MCF 10A (cell line): ENCODE measurements at regions of chr12 and their contacts with region 1.

Region 1: DNA sequence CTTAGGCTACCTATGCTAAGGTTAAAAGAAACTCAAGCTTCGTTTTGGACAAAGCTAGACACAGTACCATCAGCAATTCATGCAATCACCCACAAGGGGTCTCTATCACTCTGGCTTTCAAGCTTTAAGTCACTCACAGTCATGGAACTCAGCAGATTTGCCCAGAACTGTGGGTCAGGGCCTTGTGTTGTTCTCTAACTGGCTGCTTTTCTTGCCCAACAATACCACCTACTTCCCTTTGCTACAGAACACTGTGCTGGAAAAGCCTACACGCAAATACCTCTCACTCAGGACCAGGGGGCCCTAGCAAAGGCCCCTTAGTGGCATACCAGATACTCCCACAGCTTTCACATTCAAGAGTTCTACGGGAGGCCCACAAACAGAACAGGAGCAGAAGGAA is 9.1 kb downstream of the NEMP1 start:
- DNase-seq: peak; percentile 86
- H3K4me3 Mint-ChIP-seq: no peak overlapping the region
- H3K27ac Mint-ChIP-seq: peak overlapping the region; percentile 83
- H3K4me1 Mint-ChIP-seq: peaks cover 12% of the 10 kb centered on the region
- H3K27me3 Mint-ChIP-seq: no peaks in the 10 kb centered on the region
- CTCF ChIP-seq: peak; percentile 78

Region 2: GRCh38 chr12:57031138-57031725 is 38.3 kb before region 1 on chr12:
- CTCF ChIA-PET with region 1: interaction called, 13 read pairs
- POLR2A ChIA-PET with region 1: interaction called, 3 read pairs
- intact Hi-C with region 1: no loop called
- DNase-seq: peak; percentile 81
- H3K4me3 Mint-ChIP-seq: peak overlapping the region; percentile 41
- H3K27ac Mint-ChIP-seq: peak overlapping the region; percentile 76
- H3K4me1 Mint-ChIP-seq: peaks cover 30% of the 10 kb centered on the region
- H3K27me3 Mint-ChIP-seq: peaks cover 21% of the 10 kb centered on the region
- CTCF ChIP-seq: no peak

Region 3: GRCh38 chr12:57088459-57089248 is 19.1 kb after region 1 on chr12 and contains the start of gene NAB2:
- CTCF ChIA-PET with region 1: interaction called, 20 read pairs
- POLR2A ChIA-PET with region 1: interaction called, 19 read pairs
- intact Hi-C with region 1: loop called (anchors 1 kb)
- DNase-seq: peak; percentile 96
- H3K4me3 Mint-ChIP-seq: peak within 1 kb of the TSS; percentile 90
- H3K27ac Mint-ChIP-seq: peak within 1 kb of the TSS; percentile 94
- H3K4me1 Mint-ChIP-seq: peaks cover 36% of the 10 kb centered on the region
- H3K27me3 Mint-ChIP-seq: no peaks in the 10 kb centered on the region
- CTCF ChIP-seq: no peak
- total RNA-seq, gene NAB2: 25.8 and 30.6 TPM in 2 replicates

Region 4: DNA sequence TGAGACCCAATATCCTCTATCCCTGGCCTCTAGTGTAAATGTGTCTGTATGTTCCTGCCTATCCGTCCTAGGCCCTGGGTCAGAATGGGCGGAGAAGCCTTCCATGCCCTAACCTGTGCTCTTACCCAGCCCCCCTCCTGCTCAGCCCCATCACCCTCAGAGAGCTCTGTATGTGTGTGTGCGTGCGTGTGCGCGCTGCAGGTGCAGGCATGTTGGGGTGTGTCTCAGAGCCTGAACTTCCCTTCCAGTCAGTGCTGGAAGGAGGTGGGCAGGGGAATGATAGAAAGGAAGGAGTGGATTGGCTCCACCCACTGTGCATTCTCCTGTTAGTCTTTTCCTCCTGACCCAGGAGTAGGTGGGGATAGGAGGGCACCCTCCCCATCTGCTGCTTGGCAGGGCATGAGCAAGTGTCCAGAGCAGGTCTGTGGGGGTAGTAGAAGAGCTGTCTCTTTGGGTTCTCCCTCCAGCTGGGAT is 26.6 kb after region 1 on chr12:
- CTCF ChIA-PET with region 1: interaction called, 20 read pairs
- POLR2A ChIA-PET with region 1: interaction called, 8 read pairs
- intact Hi-C with region 1: loop called (anchors 1 kb)
- DNase-seq: peak; percentile 95
- H3K4me3 Mint-ChIP-seq: no peak overlapping the region
- H3K27ac Mint-ChIP-seq: peak overlapping the region; percentile 78
- H3K4me1 Mint-ChIP-seq: peaks cover 51% of the 10 kb centered on the region
- H3K27me3 Mint-ChIP-seq: no peaks in the 10 kb centered on the region
- CTCF ChIP-seq: no peak

Region 5: GRCh38 chr12:57175428-57176138 is 106.1 kb after region 1 on chr12:
- CTCF ChIA-PET with region 1: interaction called, 14 read pairs
- POLR2A ChIA-PET with region 1: interaction called, 9 read pairs
- intact Hi-C with region 1: no loop called
- DNase-seq: peak; percentile 94
- H3K4me3 Mint-ChIP-seq: peak overlapping the region; percentile 32
- H3K27ac Mint-ChIP-seq: peak overlapping the region; percentile 68
- H3K4me1 Mint-ChIP-seq: peaks cover 41% of the 10 kb centered on the region
- H3K27me3 Mint-ChIP-seq: no peaks in the 10 kb centered on the region
- CTCF ChIP-seq: peak; percentile 91

Region 6: DNA sequence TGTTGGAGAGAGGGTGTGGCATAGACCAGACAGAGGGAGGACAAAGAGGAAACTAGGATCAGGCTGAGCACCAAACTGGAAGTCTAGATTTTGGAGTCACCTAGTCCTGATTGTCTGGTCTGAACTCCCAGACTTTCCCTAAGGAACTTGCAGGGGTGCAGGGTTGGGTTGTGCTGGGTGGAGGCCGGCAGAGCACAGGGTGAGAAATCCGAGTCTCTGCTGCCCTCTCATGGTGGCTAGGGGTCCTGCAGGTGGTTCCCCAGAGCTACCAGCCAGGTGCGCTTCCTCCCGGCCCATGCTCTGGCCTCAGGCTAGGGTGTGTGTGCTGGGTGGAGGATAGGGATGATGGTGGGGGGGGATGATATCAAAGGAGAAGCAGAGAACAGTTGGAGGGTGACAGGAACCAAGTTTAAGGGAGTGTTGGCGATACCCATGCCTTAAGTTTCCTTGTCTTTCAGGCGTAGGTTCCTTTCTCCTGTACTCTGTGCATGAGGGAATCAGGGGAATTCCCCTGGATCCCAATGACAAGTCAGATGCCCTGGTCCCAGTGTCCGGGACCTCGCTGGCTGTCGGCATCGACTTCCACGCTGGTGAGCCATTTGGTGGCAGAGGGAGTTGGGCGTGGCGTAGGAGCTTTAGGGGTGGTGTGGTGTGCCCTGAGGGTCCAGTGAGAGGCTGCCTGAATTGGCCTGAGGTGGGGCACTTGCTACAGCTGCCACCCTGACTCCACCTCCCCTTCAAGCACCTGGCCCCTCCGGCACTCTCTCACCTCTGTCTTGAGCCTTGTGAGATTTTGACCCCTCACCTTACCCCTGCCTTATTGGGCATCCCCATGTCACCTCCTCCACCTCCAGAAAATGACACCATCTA is 113.6 kb after region 1 on chr12:
- CTCF ChIA-PET with region 1: interaction called, 14 read pairs
- POLR2A ChIA-PET with region 1: interaction called, 10 read pairs
- intact Hi-C with region 1: loop called (anchors 1 kb)
- DNase-seq: peak; percentile 82
- H3K4me3 Mint-ChIP-seq: no peak overlapping the region
- H3K27ac Mint-ChIP-seq: peak overlapping the region; percentile 33
- H3K4me1 Mint-ChIP-seq: peaks cover 10% of the 10 kb centered on the region
- H3K27me3 Mint-ChIP-seq: no peaks in the 10 kb centered on the region
- CTCF ChIP-seq: peak; percentile 89

Region 7: DNA sequence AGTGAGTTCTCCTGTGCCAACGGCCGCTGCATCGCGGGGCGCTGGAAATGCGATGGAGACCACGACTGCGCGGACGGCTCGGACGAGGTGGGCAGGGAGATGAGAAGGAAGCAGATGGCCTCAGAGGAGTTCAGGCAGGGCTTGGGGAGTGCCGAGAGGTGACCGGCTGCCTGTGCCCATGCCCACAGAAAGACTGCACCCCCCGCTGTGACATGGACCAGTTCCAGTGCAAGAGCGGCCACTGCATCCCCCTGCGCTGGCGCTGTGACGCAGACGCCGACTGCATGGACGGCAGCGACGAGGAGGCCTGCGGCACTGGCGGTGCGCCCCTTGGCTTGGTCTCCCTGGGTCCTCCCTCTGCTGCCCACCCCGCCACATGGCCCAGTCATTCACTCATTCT is 133.7 kb after region 1 on chr12:
- CTCF ChIA-PET with region 1: no interaction called
- POLR2A ChIA-PET with region 1: no interaction called
- intact Hi-C with region 1: no loop called
- DNase-seq: no peak
- H3K4me3 Mint-ChIP-seq: no peak overlapping the region
- H3K27ac Mint-ChIP-seq: peak overlapping the region; percentile 57
- H3K4me1 Mint-ChIP-seq: no peaks in the 10 kb centered on the region
- H3K27me3 Mint-ChIP-seq: no peaks in the 10 kb centered on the region
- CTCF ChIP-seq: no peak